ENCODE measurements at regions of chr10 and their contacts with region 1.

Region 1: GRCh38 chr10:75788394-75789205 is 357.2 kb downstream of the LRMDA start:
- DNase-seq: no peak
- ATAC-seq: no peak; the same call in 1 of the 2 replicates
- H3K4me3 ChIP-seq: no peak overlapping the region
- H3K27ac ChIP-seq: no peak overlapping the region
- H3K4me1 ChIP-seq: no peaks in the 10 kb centered on the region
- H3K27me3 ChIP-seq: no peaks in the 10 kb centered on the region; the same call in 1 of the 2 replicates
- CTCF ChIP-seq: no peak
- POLR2A ChIP-seq: no peak
- RAD21 ChIP-seq: no peak

Region 2: DNA sequence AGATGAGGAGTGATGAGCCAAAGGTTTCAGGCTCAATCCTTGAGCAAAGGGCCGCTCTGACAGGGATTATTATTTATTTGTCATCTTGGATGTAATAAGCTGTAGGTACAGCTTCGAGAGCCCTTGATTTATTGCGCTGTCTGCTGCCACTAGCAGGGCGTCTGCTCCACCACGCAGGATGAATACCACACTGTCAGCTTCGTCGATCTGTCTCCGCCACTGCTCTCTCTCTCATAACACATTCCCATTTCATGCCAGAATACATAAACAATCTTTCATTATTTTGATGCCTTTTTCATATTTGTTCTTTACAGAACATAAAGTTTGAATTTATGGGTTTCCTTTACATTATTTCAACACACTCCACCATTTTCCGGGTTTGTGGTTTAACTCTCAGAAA is 80.5 kb before region 1 on chr10:
- CTCF ChIA-PET with region 1: interaction called, 15 read pairs
- POLR2A ChIA-PET with region 1: no interaction called
- dilution Hi-C with region 1: no loop called
- in situ Hi-C with region 1: no loop called
- intact Hi-C with region 1: no loop called
- DNase-seq: no peak
- ATAC-seq: no peak
- H3K4me3 ChIP-seq: no peak overlapping the region
- H3K27ac ChIP-seq: no peak overlapping the region
- H3K4me1 ChIP-seq: no peaks in the 10 kb centered on the region
- H3K27me3 ChIP-seq: peaks cover 7% of the 10 kb centered on the region; the same call in 1 of the 2 replicates
- CTCF ChIP-seq: no peak
- POLR2A ChIP-seq: no peak
- RAD21 ChIP-seq: no peak